ENCODE measurements at regions of chrX and their contacts with region 1.

Region 1: GRCh38 chrX:79412972-79413371 is 45.8 kb upstream of the ITM2A start:
- DNase-seq: peak in 7 of 9 donors; percentile 13 to 65 (median 39)
- ATAC-seq: no peak
- H3K4me3 ChIP-seq: peak overlapping the region; percentile 58
- H3K4me3 Mint-ChIP-seq: peak overlapping the region; percentile 58 to 85 (median 82)
- H3K27ac ChIP-seq: peak overlapping the region; percentile 68
- H3K27ac Mint-ChIP-seq: peak overlapping the region; percentile 46 to 92 (median 68)
- H3K4me1 ChIP-seq: peaks cover 0 to 3% of the 10 kb centered on the region in 2 donors
- H3K4me1 Mint-ChIP-seq: peaks cover 13 to 46% (median 27%) of the 10 kb centered on the region in 7 donors
- H3K27me3 ChIP-seq: no peaks in the 10 kb centered on the region
- H3K27me3 Mint-ChIP-seq: no peaks in the 10 kb centered on the region

Region 2: GRCh38 chrX:78139160-78140123 is 1273.5 kb before region 1 on chrX and contains the start of gene TAF9B:
- CTCF ChIA-PET with region 1: no interaction called
- POLR2A ChIA-PET with region 1: no interaction called
- intact Hi-C with region 1: no loop called
- DNase-seq: peak; percentile 57 to 84 (median 80)
- ATAC-seq: peak; percentile 99
- H3K4me3 ChIP-seq: peak within 1 kb of the TSS; percentile 77
- H3K4me3 Mint-ChIP-seq: peak within 1 kb of the TSS; percentile 88 to 95 (median 92)
- H3K27ac ChIP-seq: peak within 1 kb of the TSS; percentile 82
- H3K27ac Mint-ChIP-seq: peak within 1 kb of the TSS; percentile 81 to 95 (median 93)
- H3K4me1 ChIP-seq: no peaks in the 10 kb centered on the region
- H3K4me1 Mint-ChIP-seq: peaks cover 0 to 11% (median 5%) of the 10 kb centered on the region in 7 donors
- H3K27me3 ChIP-seq: no peaks in the 10 kb centered on the region
- H3K27me3 Mint-ChIP-seq: no peaks in the 10 kb centered on the region
- total RNA-seq, gene TAF9B: 10.4 to 19.9 (median 18.9) TPM

Region 3: DNA sequence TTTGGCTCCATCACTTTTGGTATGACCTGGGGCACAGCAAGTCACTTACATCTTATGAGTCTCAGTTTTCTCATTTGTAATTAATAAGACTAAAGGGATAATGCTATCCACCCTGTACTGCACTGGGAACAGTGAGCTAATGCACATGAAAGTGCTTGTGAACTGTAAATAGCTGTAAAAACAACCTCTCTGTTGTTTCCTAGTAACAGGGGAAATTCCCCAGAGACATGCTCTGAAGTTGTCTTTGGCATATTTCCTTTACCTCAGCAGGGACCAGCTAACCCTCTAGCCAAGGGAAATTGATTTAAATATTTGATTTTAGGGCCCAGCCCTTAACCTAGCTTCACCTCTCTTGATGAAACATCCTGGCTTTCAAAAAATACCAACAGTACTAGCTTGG is 1079.5 kb before region 1 on chrX:
- CTCF ChIA-PET with region 1: no interaction called
- POLR2A ChIA-PET with region 1: no interaction called
- intact Hi-C with region 1: loop called in 1 of 2 experiments (anchors 5 kb)
- DNase-seq: peak in 7 of 9 donors; percentile 33 to 77 (median 55)
- ATAC-seq: peak; percentile 88
- H3K4me3 ChIP-seq: no peak overlapping the region
- H3K4me3 Mint-ChIP-seq: peak overlapping the region in 9 of 10 donors; percentile 3 to 70 (median 19)
- H3K27ac ChIP-seq: peak overlapping the region; percentile 75
- H3K27ac Mint-ChIP-seq: peak overlapping the region; percentile 60 to 99 (median 89)
- H3K4me1 ChIP-seq: peaks cover 9 to 38% of the 10 kb centered on the region in 2 donors
- H3K4me1 Mint-ChIP-seq: peaks cover 22 to 86% (median 67%) of the 10 kb centered on the region in 7 donors
- H3K27me3 ChIP-seq: no peaks in the 10 kb centered on the region
- H3K27me3 Mint-ChIP-seq: no peaks in the 10 kb centered on the region

Region 4: GRCh38 chrX:78886550-78886949 is 526.4 kb before region 1 on chrX:
- CTCF ChIA-PET with region 1: interaction called, 3 read pairs
- POLR2A ChIA-PET with region 1: no interaction called
- intact Hi-C with region 1: loop called (anchors 10 kb)
- DNase-seq: peak in 6 of 9 donors; percentile 2 to 33 (median 18)
- ATAC-seq: peak; percentile 67
- H3K4me3 ChIP-seq: no peak overlapping the region
- H3K4me3 Mint-ChIP-seq: peak overlapping the region in 3 of 10 donors; percentile 0 to 46 (median 38)
- H3K27ac ChIP-seq: no peak overlapping the region
- H3K27ac Mint-ChIP-seq: peak overlapping the region in 5 of 9 donors; percentile 6 to 51 (median 13)
- H3K4me1 ChIP-seq: peaks cover 0 to 4% of the 10 kb centered on the region in 2 donors
- H3K4me1 Mint-ChIP-seq: peaks cover 4 to 11% (median 9%) of the 10 kb centered on the region in 7 donors
- H3K27me3 ChIP-seq: no peaks in the 10 kb centered on the region
- H3K27me3 Mint-ChIP-seq: no peaks in the 10 kb centered on the region

Region 5: GRCh38 chrX:79146640-79147390 is 266.2 kb before region 1 on chrX:
- CTCF ChIA-PET with region 1: interaction called, 5 read pairs
- POLR2A ChIA-PET with region 1: no interaction called
- intact Hi-C with region 1: loop called (anchors 2 to 5 kb)
- DNase-seq: no peak
- ATAC-seq: peak; percentile 64
- H3K4me3 ChIP-seq: peak overlapping the region; percentile 71
- H3K4me3 Mint-ChIP-seq: peak overlapping the region; percentile 66 to 96 (median 92)
- H3K27ac ChIP-seq: peak overlapping the region; percentile 85
- H3K27ac Mint-ChIP-seq: peak overlapping the region; percentile 82 to 98 (median 91)
- H3K4me1 ChIP-seq: peaks cover 10 to 16% of the 10 kb centered on the region in 2 donors
- H3K4me1 Mint-ChIP-seq: peaks cover 10 to 47% (median 28%) of the 10 kb centered on the region in 7 donors
- H3K27me3 ChIP-seq: no peaks in the 10 kb centered on the region
- H3K27me3 Mint-ChIP-seq: no peaks in the 10 kb centered on the region

Region 6: GRCh38 chrX:79270401-79270800 is 142.6 kb before region 1 on chrX:
- CTCF ChIA-PET with region 1: interaction called, 6 read pairs
- POLR2A ChIA-PET with region 1: interaction called, 3 read pairs
- intact Hi-C with region 1: loop called (anchors 1 to 2 kb)
- DNase-seq: peak; percentile 29 to 76 (median 68)
- ATAC-seq: peak; percentile 98
- H3K4me3 ChIP-seq: no peak overlapping the region
- H3K4me3 Mint-ChIP-seq: peak overlapping the region; percentile 17 to 77 (median 56)
- H3K27ac ChIP-seq: peak overlapping the region; percentile 61
- H3K27ac Mint-ChIP-seq: peak overlapping the region in 8 of 9 donors; percentile 84 to 94 (median 90)
- H3K4me1 ChIP-seq: peaks cover 24 to 34% of the 10 kb centered on the region in 2 donors
- H3K4me1 Mint-ChIP-seq: peaks cover 13 to 68% (median 45%) of the 10 kb centered on the region in 7 donors
- H3K27me3 ChIP-seq: no peaks in the 10 kb centered on the region
- H3K27me3 Mint-ChIP-seq: no peaks in the 10 kb centered on the region

Region 7: GRCh38 chrX:79336869-79337815 is 75.8 kb before region 1 on chrX:
- CTCF ChIA-PET with region 1: no interaction called
- POLR2A ChIA-PET with region 1: no interaction called
- intact Hi-C with region 1: loop called (anchors 2 kb)
- DNase-seq: peak in 7 of 9 donors; percentile 14 to 58 (median 34)
- ATAC-seq: peak; percentile 71
- H3K4me3 ChIP-seq: peak overlapping the region; percentile 51
- H3K4me3 Mint-ChIP-seq: peak overlapping the region; percentile 56 to 89 (median 84)
- H3K27ac ChIP-seq: peak overlapping the region; percentile 72
- H3K27ac Mint-ChIP-seq: peak overlapping the region; percentile 85 to 97 (median 91)
- H3K4me1 ChIP-seq: peaks cover 0 to 4% of the 10 kb centered on the region in 2 donors
- H3K4me1 Mint-ChIP-seq: peaks cover 2 to 36% (median 23%) of the 10 kb centered on the region in 7 donors
- H3K27me3 ChIP-seq: no peaks in the 10 kb centered on the region
- H3K27me3 Mint-ChIP-seq: no peaks in the 10 kb centered on the region

Measured in naive thymus-derived CD4-positive, alpha-beta T cell (primary cell).